Mammary epithelial cell (primary cell): ENCODE measurements at regions of chr1 and their contacts with region 1.

Region 1: GRCh38 chr1:231383159-231383860 is 38.8 kb downstream of the EGLN1 start:
- DNase-seq: peak; percentile 74
- H3K4me3 ChIP-seq: no peak overlapping the region
- H3K27ac ChIP-seq: no peak overlapping the region
- H3K4me1 ChIP-seq: peaks cover 28% of the 10 kb centered on the region
- H3K27me3 ChIP-seq: no peaks in the 10 kb centered on the region
- CTCF ChIP-seq: no peak

Region 2: GRCh38 chr1:231407547-231408396 is 24.5 kb after region 1 on chr1:
- CTCF ChIA-PET with region 1: interaction called, 16 read pairs
- dilution Hi-C with region 1: no loop called
- in situ Hi-C with region 1: no loop called
- intact Hi-C with region 1: no loop called
- DNase-seq: peak; percentile 60
- H3K4me3 ChIP-seq: peak overlapping the region in 2 of 3 experiments; percentile 3 to 27
- H3K27ac ChIP-seq: peak overlapping the region; percentile 25
- H3K4me1 ChIP-seq: peaks cover 20% of the 10 kb centered on the region
- H3K27me3 ChIP-seq: no peaks in the 10 kb centered on the region
- CTCF ChIP-seq: no peak

Region 3: GRCh38 chr1:231626535-231626945 is 243.2 kb after region 1 on chr1 and contains the start of gene DISC1:
- CTCF ChIA-PET with region 1: no interaction called
- dilution Hi-C with region 1: no loop called
- in situ Hi-C with region 1: no loop called
- intact Hi-C with region 1: no loop called
- DNase-seq: peak; percentile 73
- H3K4me3 ChIP-seq: peak within 1 kb of the TSS; percentile 50 to 74 (median 59)
- H3K27ac ChIP-seq: no peak within 1 kb of the TSS
- H3K4me1 ChIP-seq: peaks cover 7% of the 10 kb centered on the region
- H3K27me3 ChIP-seq: peaks cover 3% of the 10 kb centered on the region
- CTCF ChIP-seq: no peak
- total RNA-seq, gene DISC1: 0.09 to 0.17 TPM